Heart right ventricle (tissue), 16 donors: ENCODE measurements at regions of chr10 and their contacts with region 1.

Region 1: GRCh38 chr10:24503461-24504320 is 220.0 kb downstream of the ARHGAP21 start:
- DNase-seq: peak in 1 of 2 donors; percentile 16
- ATAC-seq: peak in 3 of 8 donors; percentile 29 to 64 (median 52)
- H3K4me3 ChIP-seq: no peak overlapping the region
- H3K27ac ChIP-seq: no peak overlapping the region
- H3K4me1 ChIP-seq: peaks cover 0 to 10% (median 0%) of the 10 kb centered on the region in 9 donors
- H3K27me3 ChIP-seq: no peaks in the 10 kb centered on the region
- CTCF ChIP-seq: peak; percentile 27 to 73 (median 62)

Region 2: DNA sequence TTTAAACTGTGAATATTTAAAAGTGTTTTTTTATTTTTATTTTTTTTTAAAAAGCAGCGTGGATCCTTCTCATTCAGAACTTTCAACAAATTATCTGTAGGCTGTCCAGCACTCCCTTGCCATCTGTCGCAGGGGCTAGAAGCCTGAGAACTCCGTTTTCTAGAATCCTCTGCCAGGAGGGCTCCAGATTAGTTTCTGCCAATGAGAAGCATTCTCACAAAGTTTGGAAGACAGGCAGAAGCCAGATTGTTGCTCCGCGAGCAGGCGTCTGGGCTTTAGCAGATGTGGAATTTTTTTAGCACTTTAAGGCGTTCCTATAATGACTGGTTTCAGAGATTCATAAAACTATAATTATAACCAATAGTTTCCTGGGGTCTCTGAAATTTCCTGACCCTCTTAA is 515.7 kb before region 1 on chr10:
- intact Hi-C with region 1: loop called in 1 of 10 experiments (anchors 5 kb)
- DNase-seq: no peak
- ATAC-seq: no peak
- H3K4me3 ChIP-seq: no peak overlapping the region
- H3K27ac ChIP-seq: no peak overlapping the region
- H3K4me1 ChIP-seq: no peaks in the 10 kb centered on the region
- H3K27me3 ChIP-seq: no peaks in the 10 kb centered on the region
- CTCF ChIP-seq: no peak

Region 3: GRCh38 chr10:24374134-24374915 is 129.4 kb before region 1 on chr10:
- intact Hi-C with region 1: loop called in 4 of 10 experiments (anchors 5 to 10 kb)
- DNase-seq: no peak
- ATAC-seq: no peak
- H3K4me3 ChIP-seq: no peak overlapping the region
- H3K27ac ChIP-seq: no peak overlapping the region
- H3K4me1 ChIP-seq: peaks cover 0 to 18% (median 6%) of the 10 kb centered on the region in 9 donors
- H3K27me3 ChIP-seq: no peaks in the 10 kb centered on the region
- CTCF ChIP-seq: no peak

Region 4: DNA sequence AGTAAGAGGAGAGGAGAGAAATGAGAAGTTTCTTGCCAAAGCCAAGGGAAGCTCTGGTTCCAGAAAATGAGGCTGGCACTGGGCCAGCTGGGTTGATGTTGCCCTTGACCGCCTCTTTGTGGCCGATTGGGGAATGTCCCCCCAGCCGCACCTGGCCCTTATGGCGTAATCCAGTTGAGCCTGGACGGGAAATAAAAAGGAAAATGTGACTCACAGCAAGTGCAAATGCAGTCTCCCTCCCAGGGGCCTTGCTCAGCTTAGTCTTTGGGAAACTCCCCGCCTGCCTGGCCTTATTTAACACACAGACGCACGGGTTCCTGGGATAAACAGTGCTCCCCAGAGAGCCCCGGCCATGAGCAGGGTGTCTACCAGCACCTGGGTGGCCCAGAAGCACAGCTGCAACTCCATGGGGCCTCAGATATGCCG is 120.0 kb before region 1 on chr10:
- intact Hi-C with region 1: loop called in 1 of 10 experiments (anchors 10 kb)
- DNase-seq: peak; percentile 79 to 92
- ATAC-seq: peak; percentile 88 to 97 (median 93)
- H3K4me3 ChIP-seq: no peak overlapping the region
- H3K27ac ChIP-seq: peak overlapping the region; percentile 7 to 90 (median 74)
- H3K4me1 ChIP-seq: peaks cover 3 to 47% (median 32%) of the 10 kb centered on the region in 9 donors
- H3K27me3 ChIP-seq: no peaks in the 10 kb centered on the region
- CTCF ChIP-seq: peak; percentile 22 to 73 (median 57)

Region 5: DNA sequence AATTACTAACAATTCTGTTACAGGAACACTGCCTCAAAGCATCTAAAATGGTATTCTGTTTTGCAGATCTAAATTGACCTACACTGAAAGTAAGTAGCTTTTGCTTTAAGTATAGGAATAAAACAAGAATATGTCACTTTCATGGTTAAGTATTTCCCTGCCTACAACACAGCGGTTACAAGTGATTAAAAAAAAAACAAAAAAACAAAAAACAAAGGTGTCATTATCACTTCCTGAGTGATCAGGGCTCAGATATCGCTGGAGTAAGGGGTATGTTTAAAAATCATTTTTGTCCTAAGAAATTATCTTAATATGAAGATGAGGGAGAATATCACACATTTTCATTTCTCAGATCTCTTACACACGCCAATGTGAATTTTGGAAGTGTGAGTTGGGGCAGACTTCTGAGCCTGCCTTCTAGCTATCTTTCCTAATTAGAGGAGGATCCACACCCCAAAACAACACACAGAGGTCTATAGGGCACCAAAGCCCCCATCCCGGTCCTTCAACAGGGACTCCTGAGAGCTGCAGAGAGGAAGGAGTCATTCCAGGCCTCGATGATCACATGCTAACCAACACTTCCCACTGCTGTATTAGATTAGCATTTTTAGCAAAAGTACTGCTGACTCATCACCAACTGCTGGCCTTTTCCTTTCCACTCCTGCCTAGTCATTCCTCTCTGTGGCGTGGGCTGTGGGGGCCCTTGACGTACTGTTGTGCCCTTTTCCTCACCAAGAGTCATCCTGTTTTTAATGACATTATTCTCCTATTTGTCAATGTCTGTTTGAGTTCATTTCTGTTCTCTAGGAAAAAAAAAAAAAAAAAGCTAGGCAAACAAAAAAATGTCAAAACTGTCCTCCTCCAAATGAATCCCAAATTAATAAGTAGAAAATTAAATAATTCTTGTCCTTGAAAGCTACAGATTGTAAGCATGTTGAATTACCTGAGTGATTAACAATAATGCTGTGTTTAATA is 417.5 kb after region 1 on chr10:
- intact Hi-C with region 1: no loop called
- DNase-seq: peak in 1 of 2 donors; percentile 63
- ATAC-seq: peak; percentile 55 to 99 (median 90)
- H3K4me3 ChIP-seq: no peak overlapping the region
- H3K27ac ChIP-seq: peak overlapping the region in 5 of 10 donors; percentile 3 to 73 (median 21)
- H3K4me1 ChIP-seq: peaks cover 0 to 19% (median 5%) of the 10 kb centered on the region in 9 donors
- H3K27me3 ChIP-seq: no peaks in the 10 kb centered on the region
- CTCF ChIP-seq: no peak